Activated CD4-positive, alpha-beta memory T cell treated with anti-CD3 and anti-CD28 coated beads for 36 hours (primary cell): ENCODE measurements at regions of chr18 and their contacts with region 1.

Region 1: DNA sequence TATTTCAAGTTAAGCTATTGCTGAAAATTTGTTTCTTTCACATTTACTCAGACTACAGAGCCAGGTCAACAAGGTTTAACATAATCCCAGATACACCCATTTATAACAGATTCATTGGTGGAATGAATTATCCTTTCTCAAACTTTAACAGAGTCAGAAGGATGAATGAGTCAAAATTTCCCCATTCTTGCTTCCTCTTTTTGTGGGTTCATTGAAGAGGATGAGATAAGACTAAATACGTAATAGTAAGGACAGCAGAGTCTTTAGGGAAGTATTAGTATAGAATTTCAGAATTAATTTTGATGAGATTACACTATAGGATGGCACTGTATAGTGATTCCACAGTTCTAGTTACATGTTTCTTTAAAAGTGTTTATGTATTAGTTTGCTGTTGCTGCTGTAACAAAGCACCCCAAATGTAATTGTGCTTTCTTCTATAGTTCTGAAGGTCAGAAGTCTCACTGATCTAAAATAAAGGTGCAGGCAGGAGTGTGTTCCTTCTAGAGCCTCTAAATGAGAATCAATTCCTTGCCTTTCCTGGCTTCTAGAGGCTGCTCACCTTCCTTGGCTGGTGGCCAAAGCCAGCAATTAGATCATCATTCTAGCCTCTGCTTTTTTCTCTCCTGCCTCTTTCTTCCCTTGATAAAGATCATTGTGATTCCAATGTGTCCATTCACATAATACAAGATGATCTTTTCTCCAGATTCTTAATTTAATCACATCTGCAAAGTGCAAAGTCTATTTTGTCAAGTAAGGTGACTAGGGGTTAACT is 309.3 kb upstream of the PIK3C3 start:
- DNase-seq: no peak
- H3K4me3 Mint-ChIP-seq: no peak overlapping the region
- H3K27ac Mint-ChIP-seq: no peak overlapping the region
- H3K4me1 Mint-ChIP-seq: no peaks in the 10 kb centered on the region
- H3K27me3 Mint-ChIP-seq: no peaks in the 10 kb centered on the region

Region 2: GRCh38 chr18:40708726-40709125 is 937.0 kb before region 1 on chr18:
- CTCF ChIA-PET with region 1: no interaction called
- POLR2A ChIA-PET with region 1: no interaction called
- intact Hi-C with region 1: loop called (anchors 5 kb)
- DNase-seq: no peak
- H3K4me3 Mint-ChIP-seq: no peak overlapping the region
- H3K27ac Mint-ChIP-seq: no peak overlapping the region
- H3K4me1 Mint-ChIP-seq: no peaks in the 10 kb centered on the region
- H3K27me3 Mint-ChIP-seq: no peaks in the 10 kb centered on the region

Region 3: GRCh38 chr18:41674506-41674905 is 28.7 kb after region 1 on chr18:
- CTCF ChIA-PET with region 1: no interaction called
- POLR2A ChIA-PET with region 1: no interaction called
- intact Hi-C with region 1: no loop called
- DNase-seq: no peak
- H3K4me3 Mint-ChIP-seq: no peak overlapping the region
- H3K27ac Mint-ChIP-seq: no peak overlapping the region
- H3K4me1 Mint-ChIP-seq: no peaks in the 10 kb centered on the region
- H3K27me3 Mint-ChIP-seq: no peaks in the 10 kb centered on the region

Region 4: GRCh38 chr18:41798879-41799278 is 153.1 kb after region 1 on chr18:
- CTCF ChIA-PET with region 1: no interaction called
- POLR2A ChIA-PET with region 1: no interaction called
- intact Hi-C with region 1: no loop called
- DNase-seq: no peak
- H3K4me3 Mint-ChIP-seq: no peak overlapping the region
- H3K27ac Mint-ChIP-seq: no peak overlapping the region
- H3K4me1 Mint-ChIP-seq: no peaks in the 10 kb centered on the region
- H3K27me3 Mint-ChIP-seq: peaks cover 2% of the 10 kb centered on the region